Dorsolateral prefrontal cortex (tissue), 120 donors: ENCODE measurements at regions of chr16 and their contacts with region 1.

Region 1: DNA sequence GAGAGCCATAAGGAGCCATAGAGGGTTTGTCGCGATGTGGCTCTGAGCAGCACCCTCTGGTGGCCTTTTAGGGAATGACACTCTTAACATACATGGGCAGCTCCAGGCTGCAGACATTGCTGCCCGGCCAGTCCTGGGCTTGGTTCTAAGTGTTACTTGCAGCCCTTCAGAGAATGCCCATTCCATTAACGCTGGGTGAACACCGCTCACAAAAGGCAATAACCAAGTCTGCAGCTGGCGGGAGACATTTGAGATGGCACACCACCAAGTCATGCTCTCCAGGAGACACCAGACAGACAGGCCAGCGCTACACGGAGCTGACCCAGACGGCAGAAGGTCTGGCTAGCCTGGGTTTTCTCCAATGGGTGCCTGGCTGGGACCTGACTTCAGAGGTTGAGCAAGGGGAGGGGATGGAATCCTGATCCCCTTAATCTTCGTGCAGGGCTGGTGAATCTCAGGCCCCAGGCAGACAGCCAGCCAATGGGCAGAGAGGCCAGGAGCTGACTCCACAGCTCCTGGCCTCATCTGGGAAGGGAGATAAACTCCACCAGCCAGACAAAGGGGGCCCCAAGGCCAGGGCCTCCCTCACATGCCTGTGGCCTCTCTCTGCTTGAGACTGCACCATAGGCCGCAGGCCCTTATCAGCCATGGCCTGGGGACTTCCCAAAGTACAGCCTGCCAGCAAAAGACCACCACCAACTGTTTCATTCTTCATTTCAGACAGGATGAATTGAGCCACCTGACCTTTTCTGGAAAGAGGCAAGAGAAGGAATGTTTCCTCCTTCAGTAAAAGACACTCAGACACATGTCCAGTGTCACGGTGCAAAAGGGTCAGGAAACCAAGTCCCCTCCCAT is 58.8 kb downstream of the ZDHHC7 start:
- DNase-seq: peak; percentile 53 to 86 (median 73)
- H3K4me3 ChIP-seq: no peak overlapping the region
- H3K27ac ChIP-seq: peak overlapping the region in 3 of 59 donors; percentile 14 to 28 (median 19)
- H3K27me3 ChIP-seq: no peaks in the 10 kb centered on the region
- CTCF ChIP-seq: peak; percentile 77 to 97 (median 94)

Region 2: DNA sequence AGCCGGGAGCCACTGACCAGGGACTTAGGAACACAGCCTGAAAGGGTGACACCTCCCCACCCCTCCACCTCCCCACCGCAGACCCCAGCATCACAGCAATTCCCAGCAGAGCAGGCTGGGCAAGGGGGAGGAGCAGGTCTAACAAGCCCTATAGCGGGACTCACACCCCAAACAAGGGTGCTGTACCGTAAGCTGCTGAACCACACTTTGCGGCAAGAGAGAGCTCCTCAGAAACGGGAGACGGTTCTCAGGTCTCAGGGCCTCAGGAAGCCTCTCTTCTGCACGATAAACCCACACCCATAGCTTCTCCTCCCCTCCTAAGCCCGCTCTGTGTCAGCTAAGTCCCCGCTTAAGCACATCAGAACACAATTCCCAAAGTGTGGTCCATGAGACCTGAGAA is 323.0 kb before region 1 on chr16:
- intact Hi-C with region 1: loop called in 1 of 2 experiments (anchors 10 kb)
- DNase-seq: no peak
- H3K4me3 ChIP-seq: no peak overlapping the region
- H3K27ac ChIP-seq: no peak overlapping the region
- H3K27me3 ChIP-seq: no peaks in the 10 kb centered on the region
- CTCF ChIP-seq: no peak

Region 3: DNA sequence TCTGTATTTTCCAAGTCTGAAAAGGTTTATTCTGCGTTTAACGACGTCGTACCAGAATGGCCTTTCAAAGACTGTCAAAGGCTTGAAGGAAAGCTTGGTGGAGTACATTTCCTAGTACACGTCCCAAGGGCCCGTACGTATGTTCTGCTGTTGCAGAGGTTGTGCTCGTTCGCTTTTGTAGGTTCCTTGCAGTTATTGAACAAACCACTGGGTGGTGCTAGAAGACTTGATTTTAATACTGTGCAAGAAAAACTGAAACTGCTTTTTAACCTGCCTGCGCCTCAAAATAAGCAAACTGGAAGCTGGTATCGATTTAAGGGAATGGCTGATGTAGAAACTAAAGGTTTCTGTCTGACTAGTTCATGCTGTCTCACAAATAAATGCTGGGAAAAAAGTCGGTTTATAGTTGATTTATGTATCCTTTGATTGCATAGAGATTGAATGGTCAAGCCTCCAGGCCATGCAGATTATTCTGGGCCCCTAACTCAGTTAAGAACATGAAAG is 198.2 kb before region 1 on chr16:
- intact Hi-C with region 1: loop called (anchors 1 to 5 kb)
- DNase-seq: peak in 2 of 10 donors; percentile 67 to 82
- H3K4me3 ChIP-seq: peak overlapping the region in 25 of 59 donors; percentile 0 to 41 (median 26)
- H3K27ac ChIP-seq: peak overlapping the region in 28 of 59 donors; percentile 0 to 70 (median 41)
- H3K27me3 ChIP-seq: no peaks in the 10 kb centered on the region
- CTCF ChIP-seq: peak; percentile 81 to 98 (median 92)

Region 4: GRCh38 chr16:84819644-84820324 is 132.8 kb before region 1 on chr16 and contains the start of gene CRISPLD2:
- intact Hi-C with region 1: loop called in 1 of 2 experiments (anchors 5 kb)
- DNase-seq: peak; percentile 73 to 94 (median 92)
- H3K4me3 ChIP-seq: peak within 1 kb of the TSS; percentile 34 to 71 (median 59)
- H3K27ac ChIP-seq: peak within 1 kb of the TSS in 5 of 59 donors; percentile 3 to 70 (median 38)
- H3K27me3 ChIP-seq: no peaks in the 10 kb centered on the region
- CTCF ChIP-seq: peak in 4 of 56 donors; percentile 6 to 29 (median 12)
- total RNA-seq, gene CRISPLD2: 3.4 to 43.2 (median 11.6) TPM

Region 5: DNA sequence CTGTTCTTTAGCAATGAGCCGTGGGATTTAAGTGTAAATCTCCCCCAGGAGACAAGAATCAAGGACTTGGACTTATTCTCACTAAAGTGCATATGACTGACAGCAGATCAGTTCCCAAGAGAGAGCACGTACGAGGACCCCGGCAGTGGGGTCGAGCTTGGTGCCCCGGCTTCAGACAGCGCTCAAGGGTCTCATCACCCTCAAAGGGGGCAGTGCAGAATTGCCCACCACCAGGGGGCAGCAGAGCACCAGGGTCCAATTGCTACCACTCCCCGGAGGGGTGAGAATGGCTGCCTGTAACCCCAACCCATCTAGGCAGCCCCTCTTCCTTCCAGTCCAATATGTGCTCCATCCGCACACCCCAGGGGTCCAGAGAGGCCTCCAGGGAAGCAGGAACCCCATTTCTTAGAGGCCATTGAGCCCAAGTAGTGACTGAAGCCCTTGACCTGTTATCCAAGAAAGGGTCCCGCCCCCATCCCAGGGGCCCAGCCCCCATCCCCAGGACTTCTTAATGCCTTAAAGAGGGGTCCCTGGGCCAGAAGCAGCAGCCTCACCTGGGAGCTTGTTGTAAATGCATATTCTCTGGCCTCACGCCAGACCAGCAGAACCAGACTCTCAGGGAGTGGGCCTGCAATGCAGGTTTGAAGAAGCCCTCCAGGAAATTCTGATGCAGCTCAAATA is 27.3 kb before region 1 on chr16:
- intact Hi-C with region 1: loop called in 1 of 2 experiments (anchors 2 kb)
- DNase-seq: peak in 4 of 10 donors; percentile 30 to 53 (median 44)
- H3K4me3 ChIP-seq: no peak overlapping the region
- H3K27ac ChIP-seq: no peak overlapping the region
- H3K27me3 ChIP-seq: no peaks in the 10 kb centered on the region
- CTCF ChIP-seq: peak; percentile 42 to 85 (median 72)